ENCODE measurements at regions of chr2 and their contacts with region 1.

Region 1: GRCh38 chr2:231104115-231104713 is 20.6 kb downstream of the HTR2B start:
- DNase-seq: peak; percentile 35
- ATAC-seq: peak; percentile 80

Region 2: DNA sequence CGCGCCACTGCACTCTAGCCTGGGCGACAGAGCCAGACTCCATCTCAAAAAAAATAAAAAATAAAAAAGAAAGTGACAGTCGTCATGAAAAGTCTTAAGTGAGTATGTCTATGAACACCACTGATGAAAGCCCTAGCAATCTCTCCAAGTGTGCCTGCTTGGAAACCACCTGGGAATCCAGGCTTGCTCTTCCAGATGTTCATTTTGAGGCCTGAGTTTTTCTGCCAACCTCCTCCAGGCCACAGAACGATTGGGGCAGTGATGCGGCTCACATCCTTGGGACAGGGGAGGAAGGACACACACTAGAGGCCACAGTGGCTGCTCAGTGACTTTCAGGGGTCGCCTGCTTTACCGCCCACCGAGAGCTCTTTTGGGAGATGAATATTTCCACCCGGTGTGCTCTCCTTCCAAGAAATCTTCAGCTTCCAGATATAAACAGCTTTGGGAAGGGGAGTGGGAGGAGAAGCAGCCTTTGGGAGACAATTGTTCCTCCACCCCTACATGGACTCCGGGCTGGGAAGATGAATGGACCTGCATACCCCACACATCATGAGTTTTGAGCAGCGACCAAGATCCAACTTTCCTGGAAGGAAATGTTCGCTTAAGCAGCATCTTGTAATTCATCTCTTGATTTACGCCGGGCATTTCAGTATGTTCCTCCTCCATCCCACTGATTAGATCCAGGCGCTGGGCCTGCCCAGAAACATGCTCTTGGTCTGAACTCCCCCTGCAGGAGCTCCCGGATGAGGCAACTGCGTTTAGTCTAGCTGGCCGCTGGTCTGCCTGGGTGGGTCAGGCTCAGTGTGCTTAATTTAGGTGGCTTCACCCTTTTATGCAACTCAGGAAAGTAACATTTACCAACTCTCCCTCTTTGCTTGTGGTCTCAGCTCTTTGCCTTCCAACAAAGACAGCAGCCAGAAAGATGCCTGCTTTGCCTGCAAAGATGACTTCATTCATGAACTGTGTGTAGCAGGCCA is 88.0 kb after region 1 on chr2:
- intact Hi-C with region 1: loop called (anchors 5 kb)
- DNase-seq: peak; percentile 83
- ATAC-seq: peak; percentile 65

Region 3: DNA sequence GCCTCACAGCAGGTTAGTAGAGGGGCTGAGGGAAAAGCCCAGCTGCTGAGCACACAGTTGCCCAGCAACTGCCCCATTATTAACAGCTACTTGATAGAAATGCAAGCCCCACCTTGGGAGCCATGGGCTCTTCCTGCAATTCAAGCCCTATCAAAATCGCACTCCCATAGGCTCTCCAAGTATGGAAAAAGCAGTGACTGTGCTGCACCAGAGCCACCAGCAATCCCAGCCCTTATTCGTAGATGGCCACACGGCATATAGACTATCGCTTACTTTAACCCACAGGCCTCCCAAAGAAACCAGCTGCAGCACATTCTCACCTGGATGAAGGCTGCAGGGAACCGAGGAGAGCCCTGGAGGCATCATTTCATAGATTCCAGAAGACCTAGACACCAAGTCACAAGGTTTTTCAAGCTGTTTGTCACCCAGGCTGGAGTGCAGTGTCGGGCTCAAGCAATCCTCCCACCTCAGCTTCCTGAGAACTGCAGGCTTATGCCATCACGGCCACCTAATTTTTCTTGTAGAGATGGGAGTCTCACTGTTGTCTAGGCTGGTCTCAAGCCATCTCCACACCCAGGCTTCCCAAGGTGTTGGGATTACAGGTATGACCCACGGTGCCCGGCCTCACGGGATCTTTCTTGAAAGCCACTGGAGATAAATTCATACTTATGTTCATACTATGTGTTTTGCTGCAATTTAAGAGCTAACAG is 348.7 kb after region 1 on chr2:
- intact Hi-C with region 1: loop called (anchors 10 kb)
- DNase-seq: no peak
- ATAC-seq: peak; percentile 14